Heart left ventricle (tissue), 16 donors: ENCODE measurements at regions of chr2 and their contacts with region 1.

Region 1: GRCh38 chr2:219177552-219178376 is at the start of gene RETREG2:
- DNase-seq: peak; percentile 86 to 93 (median 89)
- ATAC-seq: peak; percentile 71 to 86 (median 78)
- H3K4me3 ChIP-seq: peak within 1 kb of the TSS; percentile 58 to 99 (median 92)
- H3K27ac ChIP-seq: peak within 1 kb of the TSS; percentile 96 to 100 (median 98)
- H3K4me1 ChIP-seq: peaks cover 5 to 54% (median 27%) of the 10 kb centered on the region in 12 donors
- H3K27me3 ChIP-seq: no peaks in the 10 kb centered on the region
- CTCF ChIP-seq: peak in 10 of 12 donors; percentile 11 to 67 (median 50)
- POLR2A ChIP-seq: peak; percentile 33 to 94
- total RNA-seq, gene RETREG2: 28.3 to 55.8 (median 38.2) TPM

Region 2: DNA sequence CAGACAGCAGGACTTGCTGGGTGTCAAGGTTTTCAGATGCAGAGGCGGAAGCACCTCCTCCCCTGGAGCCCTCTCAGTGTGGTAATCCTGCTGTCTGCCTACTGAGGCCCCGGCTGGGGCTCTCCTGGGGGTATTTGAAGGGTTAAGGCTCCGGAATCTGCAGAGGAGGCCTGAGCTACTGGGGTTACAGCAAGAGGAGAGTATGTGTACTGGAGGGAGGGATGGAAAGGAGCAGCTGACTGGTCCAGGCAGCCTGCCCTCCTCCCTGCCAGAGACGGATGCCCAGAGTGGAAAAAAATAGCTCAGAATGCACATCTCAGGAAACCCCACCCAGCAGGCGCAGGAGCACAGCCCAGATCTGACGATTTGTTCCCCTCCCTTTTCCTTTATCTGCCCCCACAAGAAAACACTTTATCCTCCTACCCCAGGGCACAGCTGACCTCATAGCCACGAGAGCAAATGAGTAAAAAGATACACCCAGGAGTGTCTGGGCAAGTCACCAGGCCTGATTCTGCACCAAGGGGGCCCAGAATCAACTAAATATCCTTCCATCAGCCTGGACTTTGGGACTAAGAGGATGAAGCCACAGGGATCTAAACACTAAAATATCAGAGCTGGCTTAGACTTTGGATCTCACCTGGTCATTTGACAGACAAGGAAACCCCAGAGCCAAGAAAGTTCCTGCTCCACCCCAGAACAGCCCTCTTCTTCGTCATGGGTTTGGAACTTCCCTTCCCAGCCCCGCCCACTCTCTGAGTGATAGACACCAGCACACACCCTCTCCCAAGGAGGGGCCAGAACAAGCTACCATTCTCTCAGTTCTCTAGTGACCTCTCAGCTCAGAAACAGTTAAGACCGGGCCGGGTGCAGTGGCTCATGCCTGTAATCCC is 890.9 kb before region 1 on chr2:
- intact Hi-C with region 1: loop called in 1 of 10 experiments (anchors 10 kb)
- DNase-seq: peak; percentile 88 to 96 (median 95)
- ATAC-seq: peak; percentile 83 to 89 (median 85)
- H3K4me3 ChIP-seq: peak overlapping the region; percentile 28 to 70 (median 53)
- H3K27ac ChIP-seq: peak overlapping the region; percentile 89 to 100 (median 96)
- H3K4me1 ChIP-seq: peaks cover 27 to 99% (median 92%) of the 10 kb centered on the region in 12 donors
- H3K27me3 ChIP-seq: no peaks in the 10 kb centered on the region
- CTCF ChIP-seq: no peak
- POLR2A ChIP-seq: peak in 1 of 2 donors; percentile 35

Region 3: GRCh38 chr2:218648088-218648786 is 529.5 kb before region 1 on chr2:
- intact Hi-C with region 1: no loop called
- DNase-seq: peak in 1 of 5 donors; percentile 44
- ATAC-seq: peak; percentile 15 to 73 (median 69)
- H3K4me3 ChIP-seq: no peak overlapping the region
- H3K27ac ChIP-seq: no peak overlapping the region
- H3K4me1 ChIP-seq: peaks cover 0 to 7% (median 0%) of the 10 kb centered on the region in 12 donors
- H3K27me3 ChIP-seq: no peaks in the 10 kb centered on the region
- CTCF ChIP-seq: peak; percentile 62 to 82 (median 74)
- POLR2A ChIP-seq: no peak

Region 4: DNA sequence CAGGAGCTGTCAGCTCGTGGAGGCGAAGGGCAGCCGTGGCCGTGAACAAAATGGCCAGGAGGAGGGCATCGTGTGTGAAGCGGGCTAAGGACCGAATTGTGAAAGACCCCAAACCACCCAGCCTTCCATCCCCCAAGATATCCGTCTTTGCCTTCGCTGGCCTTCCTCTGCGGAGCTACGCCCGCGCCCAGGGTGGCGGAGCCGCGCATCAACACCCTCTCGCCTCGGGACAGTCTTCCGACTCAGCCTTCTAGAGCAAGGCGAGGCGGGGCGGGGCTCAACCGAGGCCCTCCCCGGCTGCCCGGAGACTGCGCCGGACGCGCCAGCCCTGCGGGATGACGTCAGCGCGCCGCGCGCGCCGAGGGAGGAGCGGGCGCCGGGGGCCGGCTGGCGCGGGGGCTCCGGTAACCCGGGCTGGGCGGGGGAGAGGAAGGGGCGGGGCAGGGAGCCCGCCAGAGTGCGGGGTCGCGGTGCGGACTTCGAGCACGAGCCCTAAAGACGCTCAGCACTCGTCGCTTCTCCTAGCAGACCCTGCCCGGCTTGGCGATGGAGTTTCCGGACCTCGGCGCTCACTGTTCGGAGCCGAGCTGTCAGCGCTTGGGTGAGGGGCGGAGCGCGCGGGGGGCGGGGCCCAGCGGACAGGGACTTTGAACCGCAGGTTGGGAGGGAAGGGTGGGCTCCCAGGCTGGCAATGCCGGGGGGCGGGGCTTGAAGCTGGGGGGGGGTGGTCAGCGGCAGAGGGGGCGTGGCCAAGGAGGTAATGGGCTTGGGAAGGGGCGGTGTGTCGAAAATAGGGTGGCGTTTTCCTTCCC is 28.9 kb after region 1 on chr2 and contains the start of gene ZFAND2B:
- intact Hi-C with region 1: loop called in 6 of 10 experiments (anchors 1 to 5 kb)
- DNase-seq: peak; percentile 95 to 98 (median 96)
- ATAC-seq: peak; percentile 96 to 98 (median 98)
- H3K4me3 ChIP-seq: peak within 1 kb of the TSS; percentile 36 to 95 (median 71)
- H3K27ac ChIP-seq: peak within 1 kb of the TSS; percentile 80 to 99 (median 96)
- H3K4me1 ChIP-seq: peaks cover 0 to 25% (median 17%) of the 10 kb centered on the region in 12 donors
- H3K27me3 ChIP-seq: no peaks in the 10 kb centered on the region
- CTCF ChIP-seq: peak in 2 of 12 donors; percentile 12 to 24
- POLR2A ChIP-seq: peak; percentile 55 to 97
- total RNA-seq, gene ZFAND2B: 13.9 to 32.3 (median 23.5) TPM

Region 5: GRCh38 chr2:219229305-219230058 is 51.7 kb after region 1 on chr2 and contains the starts of genes ANKZF1 and ATG9A:
- intact Hi-C with region 1: loop called in 2 of 10 experiments (anchors 2 to 10 kb)
- DNase-seq: peak; percentile 98 to 100 (median 99)
- ATAC-seq: peak; percentile 99
- H3K4me3 ChIP-seq: peak within 1 kb of the TSS; percentile 80 to 92 (median 88)
- H3K27ac ChIP-seq: peak within 1 kb of the TSS; percentile 93 to 99 (median 97)
- H3K4me1 ChIP-seq: peaks cover 3 to 51% (median 26%) of the 10 kb centered on the region in 12 donors
- H3K27me3 ChIP-seq: no peaks in the 10 kb centered on the region
- CTCF ChIP-seq: no peak
- POLR2A ChIP-seq: peak in 1 of 2 donors; percentile 85
- total RNA-seq, gene ANKZF1: 14.0 to 36.8 (median 28.0) TPM
- total RNA-seq, gene ATG9A: 62.8 to 147 (median 83.5) TPM

Region 6: GRCh38 chr2:219294356-219295351 is 116.9 kb after region 1 on chr2:
- intact Hi-C with region 1: loop called in 4 of 10 experiments (anchors 5 kb)
- DNase-seq: peak; percentile 83 to 93 (median 89)
- ATAC-seq: peak; percentile 48 to 92 (median 89)
- H3K4me3 ChIP-seq: peak overlapping the region; percentile 22 to 77 (median 64)
- H3K27ac ChIP-seq: peak overlapping the region; percentile 11 to 93 (median 78)
- H3K4me1 ChIP-seq: peaks cover 0 to 24% (median 11%) of the 10 kb centered on the region in 12 donors
- H3K27me3 ChIP-seq: peaks cover 0 to 8% (median 0%) of the 10 kb centered on the region in 9 donors
- CTCF ChIP-seq: peak in 11 of 12 donors; percentile 99 to 100 (median 100)
- POLR2A ChIP-seq: peak in 1 of 2 donors; percentile 66